Naive thymus-derived CD4-positive, alpha-beta T cell (primary cell): ENCODE measurements at regions of chr6 and their contacts with region 1.

Region 1: GRCh38 chr6:90274451-90275030 is 22.1 kb downstream of the BACH2 start:
- DNase-seq: peak; percentile 57 to 99 (median 98)
- ATAC-seq: peak; percentile 96
- H3K4me3 ChIP-seq: peak overlapping the region; percentile 19
- H3K4me3 Mint-ChIP-seq: peak overlapping the region; percentile 73 to 90 (median 80)
- H3K27ac ChIP-seq: peak overlapping the region; percentile 99
- H3K27ac Mint-ChIP-seq: peak overlapping the region; percentile 80 to 100 (median 100)
- H3K4me1 ChIP-seq: peaks cover 18 to 85% of the 10 kb centered on the region in 2 donors
- H3K4me1 Mint-ChIP-seq: peaks cover 46 to 99% (median 89%) of the 10 kb centered on the region in 7 donors
- H3K27me3 ChIP-seq: no peaks in the 10 kb centered on the region
- H3K27me3 Mint-ChIP-seq: no peaks in the 10 kb centered on the region

Region 2: DNA sequence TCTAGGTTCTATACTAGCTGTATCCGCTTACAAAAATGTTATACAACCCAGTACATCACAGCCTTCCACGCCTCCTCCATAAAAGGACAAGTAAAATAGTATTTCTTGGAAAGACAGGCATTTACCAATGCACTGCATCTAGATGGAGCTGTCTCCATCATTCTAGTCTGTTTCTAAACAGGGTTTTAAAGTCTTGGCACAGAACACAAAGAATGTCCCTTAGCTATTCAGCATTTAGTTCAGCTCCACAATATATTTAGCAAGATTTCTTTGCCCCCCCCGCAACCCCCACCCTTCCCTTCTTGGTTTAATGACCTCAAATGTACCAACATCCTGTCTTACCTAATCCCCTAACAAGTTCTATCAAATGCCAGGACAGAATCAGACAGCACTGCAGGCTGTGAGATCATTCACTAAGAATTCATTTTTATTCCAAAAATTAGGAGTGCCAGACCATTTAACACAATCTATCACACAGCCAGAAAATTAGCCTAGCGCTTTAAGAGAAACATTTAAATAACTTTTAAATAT is 176.5 kb before region 1 on chr6:
- CTCF ChIA-PET with region 1: interaction called, 3 read pairs
- POLR2A ChIA-PET with region 1: interaction called, 6 read pairs
- intact Hi-C with region 1: loop called in 1 of 2 experiments (anchors 5 kb)
- DNase-seq: peak in 4 of 9 donors; percentile 18 to 58 (median 28)
- ATAC-seq: peak; percentile 72
- H3K4me3 ChIP-seq: no peak overlapping the region
- H3K4me3 Mint-ChIP-seq: peak overlapping the region in 9 of 10 donors; percentile 4 to 71 (median 37)
- H3K27ac ChIP-seq: peak overlapping the region; percentile 4
- H3K27ac Mint-ChIP-seq: peak overlapping the region in 8 of 9 donors; percentile 46 to 89 (median 78)
- H3K4me1 ChIP-seq: peaks cover 0 to 59% of the 10 kb centered on the region in 2 donors
- H3K4me1 Mint-ChIP-seq: peaks cover 49 to 97% (median 88%) of the 10 kb centered on the region in 7 donors
- H3K27me3 ChIP-seq: no peaks in the 10 kb centered on the region
- H3K27me3 Mint-ChIP-seq: peaks cover 0 to 4% (median 0%) of the 10 kb centered on the region in 5 donors

Region 3: GRCh38 chr6:90194371-90194841 is 80.1 kb before region 1 on chr6:
- CTCF ChIA-PET with region 1: no interaction called
- POLR2A ChIA-PET with region 1: no interaction called
- intact Hi-C with region 1: loop called in 1 of 2 experiments (anchors 1 kb)
- DNase-seq: peak in 1 of 9 donors; percentile 37
- ATAC-seq: no peak
- H3K4me3 ChIP-seq: no peak overlapping the region
- H3K4me3 Mint-ChIP-seq: peak overlapping the region in 9 of 10 donors; percentile 21 to 81 (median 63)
- H3K27ac ChIP-seq: peak overlapping the region; percentile 63
- H3K27ac Mint-ChIP-seq: peak overlapping the region; percentile 31 to 96 (median 82)
- H3K4me1 ChIP-seq: peaks cover 0 to 61% of the 10 kb centered on the region in 2 donors
- H3K4me1 Mint-ChIP-seq: peaks cover 27 to 100% (median 90%) of the 10 kb centered on the region in 7 donors
- H3K27me3 ChIP-seq: no peaks in the 10 kb centered on the region
- H3K27me3 Mint-ChIP-seq: no peaks in the 10 kb centered on the region

Region 4: GRCh38 chr6:90216072-90216977 is 58.2 kb before region 1 on chr6:
- CTCF ChIA-PET with region 1: interaction called, 7 read pairs
- POLR2A ChIA-PET with region 1: interaction called, 31 read pairs
- intact Hi-C with region 1: loop called (anchors 1 kb)
- DNase-seq: peak in 5 of 9 donors; percentile 61 to 82 (median 63)
- ATAC-seq: peak; percentile 69
- H3K4me3 ChIP-seq: peak overlapping the region; percentile 18
- H3K4me3 Mint-ChIP-seq: peak overlapping the region in 7 of 10 donors; percentile 42 to 74 (median 68)
- H3K27ac ChIP-seq: peak overlapping the region; percentile 85
- H3K27ac Mint-ChIP-seq: no peak overlapping the region
- H3K4me1 ChIP-seq: peaks cover 0 to 97% of the 10 kb centered on the region in 2 donors
- H3K4me1 Mint-ChIP-seq: peaks cover 0 to 33% (median 31%) of the 10 kb centered on the region in 7 donors
- H3K27me3 ChIP-seq: no peaks in the 10 kb centered on the region
- H3K27me3 Mint-ChIP-seq: no peaks in the 10 kb centered on the region

Region 5: DNA sequence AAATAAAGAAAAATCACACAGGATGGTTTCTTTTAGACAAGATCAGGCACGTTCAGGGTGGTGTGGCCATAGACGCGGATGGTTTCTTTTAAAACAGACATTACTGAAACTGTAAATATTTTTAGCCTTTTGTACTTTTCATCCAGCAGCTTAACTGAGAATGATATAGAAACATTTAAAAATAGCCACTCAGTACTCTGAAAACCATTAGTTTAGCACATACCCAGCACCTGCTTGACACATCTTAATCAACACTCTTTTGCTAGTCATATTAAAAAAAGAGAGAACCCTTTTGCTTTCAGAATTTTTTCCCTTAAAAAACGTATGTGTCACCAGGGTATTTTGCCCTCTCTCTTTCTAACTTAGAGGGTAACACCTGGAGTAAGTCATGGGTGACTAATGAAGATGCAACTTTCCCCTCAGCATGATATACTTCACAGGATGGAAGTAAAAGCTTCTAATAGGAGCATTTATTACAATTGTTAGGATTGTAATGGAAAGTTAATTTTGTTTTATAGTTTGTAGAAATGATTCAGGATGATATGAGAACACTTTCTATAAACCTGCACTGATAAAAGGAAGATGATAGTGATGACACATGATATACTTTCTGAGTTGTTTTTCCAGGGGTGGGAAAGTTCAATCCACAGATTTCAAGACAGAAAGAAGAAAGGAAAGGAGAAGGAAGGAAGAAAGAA is 23.1 kb before region 1 on chr6:
- CTCF ChIA-PET with region 1: interaction called, 5 read pairs
- POLR2A ChIA-PET with region 1: interaction called, 5 read pairs
- intact Hi-C with region 1: loop called (anchors 1 kb)
- DNase-seq: no peak
- ATAC-seq: no peak
- H3K4me3 ChIP-seq: no peak overlapping the region
- H3K4me3 Mint-ChIP-seq: peak overlapping the region in 8 of 10 donors; percentile 7 to 71 (median 48)
- H3K27ac ChIP-seq: peak overlapping the region; percentile 53
- H3K27ac Mint-ChIP-seq: peak overlapping the region; percentile 49 to 98 (median 85)
- H3K4me1 ChIP-seq: peaks cover 0 to 55% of the 10 kb centered on the region in 2 donors
- H3K4me1 Mint-ChIP-seq: peaks cover 37 to 99% (median 90%) of the 10 kb centered on the region in 7 donors
- H3K27me3 ChIP-seq: no peaks in the 10 kb centered on the region
- H3K27me3 Mint-ChIP-seq: no peaks in the 10 kb centered on the region

Region 6: GRCh38 chr6:90263633-90264032 is 10.9 kb before region 1 on chr6:
- CTCF ChIA-PET with region 1: interaction called, 6 read pairs
- POLR2A ChIA-PET with region 1: interaction called, 29 read pairs
- intact Hi-C with region 1: loop called in 1 of 2 experiments (anchors 1 kb)
- DNase-seq: no peak
- ATAC-seq: no peak
- H3K4me3 ChIP-seq: no peak overlapping the region
- H3K4me3 Mint-ChIP-seq: peak overlapping the region in 4 of 10 donors; percentile 44 to 82 (median 68)
- H3K27ac ChIP-seq: peak overlapping the region; percentile 52
- H3K27ac Mint-ChIP-seq: peak overlapping the region in 8 of 9 donors; percentile 70 to 98 (median 96)
- H3K4me1 ChIP-seq: peaks cover 0 to 91% of the 10 kb centered on the region in 2 donors
- H3K4me1 Mint-ChIP-seq: peaks cover 48 to 100% (median 97%) of the 10 kb centered on the region in 7 donors
- H3K27me3 ChIP-seq: no peaks in the 10 kb centered on the region
- H3K27me3 Mint-ChIP-seq: no peaks in the 10 kb centered on the region

Region 7: DNA sequence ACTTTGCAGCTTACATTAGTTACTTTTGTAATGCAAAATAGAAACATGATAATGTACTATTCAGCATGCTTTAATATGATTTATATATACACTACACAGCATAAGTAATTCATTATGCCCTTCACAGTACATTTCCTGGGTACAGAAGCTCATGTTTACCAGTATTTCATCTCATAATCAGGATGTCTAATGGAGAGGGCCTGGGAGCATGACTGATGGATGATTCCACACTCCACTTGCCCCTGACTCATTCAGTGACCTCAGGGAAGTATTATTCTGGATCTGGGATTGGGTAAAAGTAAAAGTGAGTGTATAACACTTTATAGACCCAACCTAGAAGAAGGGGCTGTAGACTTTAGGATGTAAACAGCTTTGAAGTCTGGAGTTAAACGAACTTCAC is 53.5 kb after region 1 on chr6:
- CTCF ChIA-PET with region 1: no interaction called
- POLR2A ChIA-PET with region 1: no interaction called
- intact Hi-C with region 1: no loop called
- DNase-seq: no peak
- ATAC-seq: no peak
- H3K4me3 ChIP-seq: no peak overlapping the region
- H3K4me3 Mint-ChIP-seq: no peak overlapping the region
- H3K27ac ChIP-seq: no peak overlapping the region
- H3K27ac Mint-ChIP-seq: no peak overlapping the region
- H3K4me1 ChIP-seq: no peaks in the 10 kb centered on the region
- H3K4me1 Mint-ChIP-seq: no peaks in the 10 kb centered on the region
- H3K27me3 ChIP-seq: no peaks in the 10 kb centered on the region
- H3K27me3 Mint-ChIP-seq: no peaks in the 10 kb centered on the region

Region 8: DNA sequence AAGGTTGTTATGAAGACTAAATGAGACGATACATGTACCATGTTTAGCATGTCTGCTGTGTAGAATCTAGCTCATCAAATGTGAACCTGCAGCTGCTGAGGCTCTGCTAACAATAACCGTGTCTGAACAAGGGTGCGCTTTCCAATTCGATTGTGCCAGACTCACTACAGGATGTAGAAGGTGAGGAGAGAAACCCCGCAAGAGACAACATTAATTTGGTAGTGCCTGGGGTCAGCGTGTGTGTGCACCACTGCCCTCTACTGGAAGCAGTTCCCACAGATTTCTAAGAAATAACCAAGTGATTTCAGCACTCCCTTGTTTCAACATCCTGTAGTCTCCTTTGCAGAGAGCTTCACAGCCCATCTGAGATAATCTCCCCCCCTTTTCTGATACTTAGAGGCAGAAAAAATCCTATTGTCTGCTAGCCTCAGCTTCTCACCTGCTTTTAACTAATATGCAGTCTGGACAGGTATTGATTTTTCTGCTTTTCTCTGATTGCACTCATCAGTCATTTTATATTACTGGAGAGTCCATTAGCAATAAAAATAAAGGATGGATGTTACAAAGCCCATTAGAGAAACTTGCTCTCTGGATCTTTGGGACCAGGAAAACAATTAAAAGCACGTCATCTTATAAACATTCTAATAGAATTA is 118.8 kb after region 1 on chr6:
- CTCF ChIA-PET with region 1: interaction called, 4 read pairs
- POLR2A ChIA-PET with region 1: no interaction called
- intact Hi-C with region 1: loop called in 1 of 2 experiments (anchors 1 kb)
- DNase-seq: peak; percentile 43 to 87 (median 81)
- ATAC-seq: peak; percentile 81
- H3K4me3 ChIP-seq: no peak overlapping the region
- H3K4me3 Mint-ChIP-seq: peak overlapping the region in 9 of 10 donors; percentile 2 to 59 (median 26)
- H3K27ac ChIP-seq: no peak overlapping the region
- H3K27ac Mint-ChIP-seq: peak overlapping the region; percentile 7 to 77 (median 26)
- H3K4me1 ChIP-seq: peaks cover 18 to 29% of the 10 kb centered on the region in 2 donors
- H3K4me1 Mint-ChIP-seq: peaks cover 15 to 43% (median 38%) of the 10 kb centered on the region in 7 donors
- H3K27me3 ChIP-seq: no peaks in the 10 kb centered on the region
- H3K27me3 Mint-ChIP-seq: peaks cover 0 to 4% (median 0%) of the 10 kb centered on the region in 5 donors